ENCODE measurements at regions of chr16 and their contacts with region 1.

Region 1: GRCh38 chr16:69123910-69124309 is 8.5 kb downstream of the CHTF8 start:
- DNase-seq: peak; percentile 45 to 76 (median 70)
- H3K4me3 ChIP-seq: no peak overlapping the region
- H3K27ac ChIP-seq: no peak overlapping the region
- H3K4me1 ChIP-seq: peaks cover 0 to 14% of the 10 kb centered on the region in 2 donors
- H3K27me3 ChIP-seq: no peaks in the 10 kb centered on the region
- CTCF ChIP-seq: peak; percentile 59 to 88 (median 74)
- POLR2A ChIP-seq: no peak

Region 2: GRCh38 chr16:67750466-67750865 is 1373.4 kb before region 1 on chr16:
- intact Hi-C with region 1: no loop called
- DNase-seq: no peak
- H3K4me3 ChIP-seq: no peak overlapping the region
- H3K27ac ChIP-seq: no peak overlapping the region
- H3K4me1 ChIP-seq: peaks cover 0 to 10% of the 10 kb centered on the region in 2 donors
- H3K27me3 ChIP-seq: no peaks in the 10 kb centered on the region
- CTCF ChIP-seq: no peak
- POLR2A ChIP-seq: no peak

Region 3: DNA sequence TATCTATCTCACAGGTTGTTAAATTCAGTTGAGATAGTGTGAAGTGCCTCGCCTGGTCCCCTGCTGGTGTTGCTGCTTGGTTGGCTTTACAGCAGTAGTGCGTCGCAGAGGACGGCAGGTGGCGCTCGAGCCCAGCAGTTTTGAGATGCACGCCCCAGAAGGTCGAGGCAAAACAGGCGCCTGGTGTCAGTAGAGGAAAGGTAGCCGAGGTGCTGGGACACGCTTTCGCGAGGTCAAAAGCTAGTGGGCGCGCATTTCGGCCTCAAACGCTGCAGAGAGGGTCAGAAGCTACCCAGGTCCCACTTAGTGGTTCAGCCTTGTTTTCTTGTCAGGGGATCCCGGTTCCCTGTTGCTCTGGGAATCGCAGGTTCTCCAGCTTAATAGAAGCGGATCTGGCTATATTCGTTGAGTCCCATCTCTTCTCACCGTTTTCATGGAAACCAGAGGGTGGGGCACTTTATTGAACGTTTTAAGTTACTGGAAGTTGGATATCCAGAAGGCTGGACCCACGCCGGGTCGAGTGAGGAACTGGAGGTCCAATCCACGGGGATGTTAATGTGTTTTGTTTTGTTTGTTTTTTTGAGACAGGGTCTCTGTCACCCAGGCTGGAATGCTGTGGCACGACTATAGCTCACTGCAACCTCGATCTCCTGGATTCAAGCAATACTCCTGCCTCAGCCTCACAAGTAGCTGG is 595.1 kb before region 1 on chr16:
- intact Hi-C with region 1: loop called in 1 of 2 experiments (anchors 5 kb)
- DNase-seq: peak; percentile 80 to 94 (median 84)
- H3K4me3 ChIP-seq: peak overlapping the region in 1 of 4 donors; percentile 25
- H3K27ac ChIP-seq: no peak overlapping the region
- H3K4me1 ChIP-seq: peaks cover 4 to 19% of the 10 kb centered on the region in 2 donors
- H3K27me3 ChIP-seq: no peaks in the 10 kb centered on the region
- CTCF ChIP-seq: peak; percentile 89 to 95 (median 94)
- POLR2A ChIP-seq: no peak

Region 4: DNA sequence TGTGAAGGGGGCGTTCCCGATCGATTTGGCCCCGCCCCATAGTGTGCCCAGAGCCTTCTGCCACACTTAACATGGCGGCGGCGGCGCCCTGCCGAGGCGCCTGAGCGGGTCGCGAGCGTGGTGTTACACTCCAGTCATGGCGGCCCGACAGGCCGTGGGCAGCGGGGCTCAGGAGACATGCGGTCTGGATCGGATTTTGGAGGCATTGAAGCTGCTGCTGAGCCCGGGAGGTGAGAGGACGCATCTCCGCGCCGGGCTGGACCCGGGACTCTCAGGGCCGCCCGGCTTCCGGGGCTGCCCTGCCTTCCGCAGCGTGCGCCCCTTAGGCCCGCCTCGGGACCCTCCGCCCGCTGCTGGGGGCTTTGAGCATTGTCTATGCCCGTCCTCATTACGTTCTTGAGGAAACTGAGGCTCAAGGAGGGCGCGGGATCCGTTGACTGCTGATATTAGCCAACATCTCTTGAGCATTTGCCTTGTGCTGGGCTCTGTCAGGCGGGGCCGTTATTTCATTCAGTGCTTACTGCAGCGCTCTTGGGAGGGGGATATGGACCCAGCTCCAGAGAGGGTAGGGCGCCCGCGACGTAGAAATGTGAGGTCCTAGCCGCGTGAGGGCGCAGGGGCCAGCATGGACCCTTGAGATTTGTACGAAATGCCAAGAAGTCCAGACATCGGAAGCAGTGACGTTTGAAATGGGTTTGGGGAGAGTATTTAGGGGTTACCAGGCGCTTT is 280.3 kb before region 1 on chr16 and contains the start of gene TANGO6:
- intact Hi-C with region 1: loop called (anchors 10 kb)
- DNase-seq: peak; percentile 79 to 89 (median 84)
- H3K4me3 ChIP-seq: peak within 1 kb of the TSS in 3 of 4 donors; percentile 80 to 97 (median 85)
- H3K27ac ChIP-seq: peak within 1 kb of the TSS in 4 of 5 donors; percentile 53 to 91 (median 79)
- H3K4me1 ChIP-seq: peaks cover 0 to 5% of the 10 kb centered on the region in 2 donors
- H3K27me3 ChIP-seq: no peaks in the 10 kb centered on the region
- CTCF ChIP-seq: peak in 1 of 6 experiments; percentile 10
- POLR2A ChIP-seq: peak; percentile 24 to 59
- total RNA-seq, gene TANGO6: 8.2 to 17.9 (median 13.5) TPM

Region 5: DNA sequence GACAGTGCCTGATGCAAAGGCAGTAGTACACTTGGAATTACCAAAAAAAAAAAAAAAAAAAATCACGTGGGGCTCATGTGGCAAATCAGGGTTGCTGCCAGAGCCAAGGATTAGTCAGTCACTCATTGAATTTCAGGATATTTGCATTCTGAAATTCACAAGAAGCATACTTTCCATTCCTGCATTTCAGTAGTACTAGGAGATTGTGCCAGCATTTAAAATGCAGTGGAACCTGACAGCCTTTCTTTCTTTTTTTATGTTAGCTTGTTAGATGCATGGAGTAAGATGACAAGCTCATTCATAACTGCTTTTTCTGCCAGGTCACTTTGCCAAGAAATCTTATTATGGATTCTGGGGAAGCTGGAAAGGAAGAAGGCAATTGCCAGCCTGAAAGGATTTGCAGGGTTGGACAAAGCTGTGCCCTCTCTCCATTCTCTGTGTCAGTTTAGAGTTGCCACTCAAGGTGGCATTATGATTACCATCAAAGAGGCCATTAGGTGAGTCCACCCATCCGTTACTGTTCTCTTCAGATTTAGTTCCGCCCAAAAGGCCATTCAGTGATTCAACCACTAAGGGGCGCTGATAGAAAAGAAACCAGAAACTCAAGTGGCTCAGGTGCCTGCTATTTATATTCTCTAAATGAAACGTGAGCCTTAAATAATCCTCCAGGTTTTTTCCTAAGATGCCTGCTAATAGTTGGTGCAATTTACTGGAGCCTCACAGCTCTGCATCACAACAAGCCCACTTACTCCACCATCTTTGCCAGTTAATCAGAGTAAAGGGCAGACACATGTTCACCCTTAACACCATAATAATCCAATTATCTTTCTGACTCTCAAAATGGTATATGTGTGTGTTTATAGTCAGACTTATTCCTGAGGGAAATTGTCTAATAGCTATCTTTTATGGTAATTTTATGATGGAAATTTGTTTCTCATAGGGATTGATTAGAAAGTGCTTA is 221.6 kb before region 1 on chr16:
- intact Hi-C with region 1: loop called in 1 of 2 experiments (anchors 5 kb)
- DNase-seq: peak; percentile 20 to 76 (median 34)
- H3K4me3 ChIP-seq: no peak overlapping the region
- H3K27ac ChIP-seq: no peak overlapping the region
- H3K4me1 ChIP-seq: no peaks in the 10 kb centered on the region
- H3K27me3 ChIP-seq: no peaks in the 10 kb centered on the region
- CTCF ChIP-seq: peak; percentile 51 to 68 (median 60)
- POLR2A ChIP-seq: no peak